Naive thymus-derived CD4-positive, alpha-beta T cell (primary cell): ENCODE measurements at regions of chr10 and their contacts with region 1.

Region 1: GRCh38 chr10:132536971-132537712 is 445 bp upstream of the INPP5A start:
- DNase-seq: peak; percentile 100
- ATAC-seq: peak; percentile 94
- H3K4me3 ChIP-seq: peak overlapping the region; percentile 57
- H3K4me3 Mint-ChIP-seq: peak overlapping the region; percentile 66 to 98 (median 78)
- H3K27ac ChIP-seq: peak overlapping the region; percentile 81
- H3K27ac Mint-ChIP-seq: peak overlapping the region in 3 of 9 donors; percentile 72 to 78 (median 76)
- H3K4me1 ChIP-seq: peaks cover 11 to 41% of the 10 kb centered on the region in 2 donors
- H3K4me1 Mint-ChIP-seq: peaks cover 33 to 53% (median 42%) of the 10 kb centered on the region in 7 donors
- H3K27me3 ChIP-seq: no peaks in the 10 kb centered on the region
- H3K27me3 Mint-ChIP-seq: peaks cover 0 to 27% (median 0%) of the 10 kb centered on the region in 5 donors

Region 2: GRCh38 chr10:132163278-132163765 is 373.8 kb before region 1 on chr10:
- CTCF ChIA-PET with region 1: no interaction called
- POLR2A ChIA-PET with region 1: no interaction called
- intact Hi-C with region 1: loop called (anchors 1 to 5 kb)
- DNase-seq: peak in 4 of 9 donors; percentile 25 to 70 (median 43)
- ATAC-seq: peak; percentile 55
- H3K4me3 ChIP-seq: no peak overlapping the region
- H3K4me3 Mint-ChIP-seq: peak overlapping the region in 2 of 10 donors; percentile 30 to 64
- H3K27ac ChIP-seq: peak overlapping the region; percentile 80
- H3K27ac Mint-ChIP-seq: peak overlapping the region in 8 of 9 donors; percentile 28 to 86 (median 73)
- H3K4me1 ChIP-seq: peaks cover 23 to 33% of the 10 kb centered on the region in 2 donors
- H3K4me1 Mint-ChIP-seq: peaks cover 16 to 54% (median 43%) of the 10 kb centered on the region in 7 donors
- H3K27me3 ChIP-seq: no peaks in the 10 kb centered on the region
- H3K27me3 Mint-ChIP-seq: no peaks in the 10 kb centered on the region

Region 3: GRCh38 chr10:132396495-132397035 is 140.6 kb before region 1 on chr10:
- CTCF ChIA-PET with region 1: no interaction called
- POLR2A ChIA-PET with region 1: no interaction called
- intact Hi-C with region 1: loop called (anchors 1 to 5 kb)
- DNase-seq: peak; percentile 61 to 78 (median 74)
- ATAC-seq: peak; percentile 78
- H3K4me3 ChIP-seq: no peak overlapping the region
- H3K4me3 Mint-ChIP-seq: peak overlapping the region in 1 of 10 donors; percentile 94
- H3K27ac ChIP-seq: peak overlapping the region; percentile 77
- H3K27ac Mint-ChIP-seq: no peak overlapping the region
- H3K4me1 ChIP-seq: peaks cover 9 to 10% of the 10 kb centered on the region in 2 donors
- H3K4me1 Mint-ChIP-seq: peaks cover 0 to 42% (median 25%) of the 10 kb centered on the region in 7 donors
- H3K27me3 ChIP-seq: no peaks in the 10 kb centered on the region
- H3K27me3 Mint-ChIP-seq: peaks cover 0 to 6% (median 0%) of the 10 kb centered on the region in 5 donors

Region 4: GRCh38 chr10:132489087-132489703 is 47.9 kb before region 1 on chr10:
- CTCF ChIA-PET with region 1: no interaction called
- POLR2A ChIA-PET with region 1: no interaction called
- intact Hi-C with region 1: no loop called
- DNase-seq: no peak
- ATAC-seq: no peak
- H3K4me3 ChIP-seq: no peak overlapping the region
- H3K4me3 Mint-ChIP-seq: no peak overlapping the region
- H3K27ac ChIP-seq: no peak overlapping the region
- H3K27ac Mint-ChIP-seq: no peak overlapping the region
- H3K4me1 ChIP-seq: no peaks in the 10 kb centered on the region
- H3K4me1 Mint-ChIP-seq: peaks cover 0 to 5% (median 0%) of the 10 kb centered on the region in 7 donors
- H3K27me3 ChIP-seq: no peaks in the 10 kb centered on the region
- H3K27me3 Mint-ChIP-seq: no peaks in the 10 kb centered on the region

Region 5: DNA sequence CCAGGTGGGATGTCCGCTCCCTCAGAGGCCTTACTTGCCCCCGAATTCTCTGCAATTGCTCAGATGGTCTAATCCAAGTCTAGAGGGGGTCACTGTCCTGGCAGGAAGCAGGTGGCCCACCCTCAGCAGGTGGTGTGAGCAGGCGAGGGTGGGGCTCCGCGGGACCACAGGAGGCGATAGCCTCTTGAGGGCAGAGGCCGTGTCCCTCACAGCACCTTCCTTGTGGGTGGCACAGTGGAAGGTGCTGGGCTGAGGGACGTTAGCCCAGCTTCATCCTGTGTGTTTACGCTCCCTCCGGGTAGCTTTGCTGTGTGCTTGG is 37.8 kb before region 1 on chr10:
- CTCF ChIA-PET with region 1: no interaction called
- POLR2A ChIA-PET with region 1: no interaction called
- intact Hi-C with region 1: no loop called
- DNase-seq: no peak
- ATAC-seq: no peak
- H3K4me3 ChIP-seq: no peak overlapping the region
- H3K4me3 Mint-ChIP-seq: no peak overlapping the region
- H3K27ac ChIP-seq: no peak overlapping the region
- H3K27ac Mint-ChIP-seq: no peak overlapping the region
- H3K4me1 ChIP-seq: no peaks in the 10 kb centered on the region
- H3K4me1 Mint-ChIP-seq: no peaks in the 10 kb centered on the region
- H3K27me3 ChIP-seq: no peaks in the 10 kb centered on the region
- H3K27me3 Mint-ChIP-seq: peaks cover 0 to 17% (median 0%) of the 10 kb centered on the region in 5 donors

Region 6: GRCh38 chr10:132571650-132572535 is 34.8 kb after region 1 on chr10:
- CTCF ChIA-PET with region 1: interaction called, 3 read pairs
- POLR2A ChIA-PET with region 1: interaction called, 3 read pairs
- intact Hi-C with region 1: loop called (anchors 1 kb)
- DNase-seq: peak in 3 of 9 donors; percentile 18 to 72 (median 36)
- ATAC-seq: peak; percentile 44
- H3K4me3 ChIP-seq: no peak overlapping the region
- H3K4me3 Mint-ChIP-seq: peak overlapping the region in 4 of 10 donors; percentile 56 to 79 (median 74)
- H3K27ac ChIP-seq: no peak overlapping the region
- H3K27ac Mint-ChIP-seq: peak overlapping the region in 6 of 9 donors; percentile 16 to 74 (median 70)
- H3K4me1 ChIP-seq: peaks cover 10 to 22% of the 10 kb centered on the region in 2 donors
- H3K4me1 Mint-ChIP-seq: peaks cover 2 to 31% (median 26%) of the 10 kb centered on the region in 7 donors
- H3K27me3 ChIP-seq: no peaks in the 10 kb centered on the region
- H3K27me3 Mint-ChIP-seq: peaks cover 0 to 2% (median 0%) of the 10 kb centered on the region in 5 donors

Region 7: DNA sequence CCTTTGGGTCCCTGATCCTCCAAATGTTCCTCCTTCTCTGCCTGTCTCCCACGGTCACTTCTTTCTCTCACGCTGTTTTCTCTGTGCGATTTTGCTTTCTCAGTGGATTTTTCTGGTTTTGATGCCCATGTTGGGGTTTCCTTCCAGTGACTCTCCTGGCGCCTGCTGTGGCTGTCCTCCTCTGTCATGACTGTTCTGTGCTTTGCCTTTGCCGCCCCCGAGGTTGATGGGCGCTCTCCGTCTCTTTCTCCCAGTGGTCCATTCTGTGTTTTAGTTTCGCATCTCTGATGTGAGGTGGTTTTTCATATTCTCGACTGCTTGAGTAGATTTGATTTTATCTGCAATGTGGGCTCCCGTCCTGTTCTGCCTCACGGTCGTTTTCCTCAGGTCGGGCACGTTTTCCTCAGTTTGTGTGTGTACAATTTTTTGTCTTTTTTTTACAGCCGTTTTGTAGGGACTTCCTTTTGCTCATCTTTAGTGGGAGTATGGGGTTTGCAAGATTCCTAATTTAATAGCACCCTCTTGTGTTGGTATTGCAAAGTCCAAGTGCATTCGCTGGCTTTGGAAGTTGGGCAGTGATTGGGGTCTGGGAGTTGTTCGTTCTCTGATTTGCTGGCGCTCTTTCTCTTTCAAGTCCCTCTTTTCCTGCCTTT is 100.5 kb after region 1 on chr10:
- CTCF ChIA-PET with region 1: interaction called, 9 read pairs
- POLR2A ChIA-PET with region 1: no interaction called
- intact Hi-C with region 1: loop called (anchors 1 to 5 kb)
- DNase-seq: peak in 6 of 9 donors; percentile 30 to 64 (median 56)
- ATAC-seq: peak; percentile 79
- H3K4me3 ChIP-seq: no peak overlapping the region
- H3K4me3 Mint-ChIP-seq: peak overlapping the region in 2 of 10 donors; percentile 11 to 46
- H3K27ac ChIP-seq: no peak overlapping the region
- H3K27ac Mint-ChIP-seq: peak overlapping the region in 3 of 9 donors; percentile 48 to 80 (median 76)
- H3K4me1 ChIP-seq: no peaks in the 10 kb centered on the region
- H3K4me1 Mint-ChIP-seq: peaks cover 24 to 62% (median 55%) of the 10 kb centered on the region in 7 donors
- H3K27me3 ChIP-seq: no peaks in the 10 kb centered on the region
- H3K27me3 Mint-ChIP-seq: peaks cover 0 to 6% (median 0%) of the 10 kb centered on the region in 5 donors

Region 8: GRCh38 chr10:133378251-133379096 is 841.3 kb after region 1 on chr10:
- CTCF ChIA-PET with region 1: no interaction called
- POLR2A ChIA-PET with region 1: no interaction called
- intact Hi-C with region 1: loop called (anchors 5 to 10 kb)
- DNase-seq: peak in 8 of 9 donors; percentile 51 to 78 (median 59)
- ATAC-seq: peak; percentile 73
- H3K4me3 ChIP-seq: peak overlapping the region; percentile 92
- H3K4me3 Mint-ChIP-seq: peak overlapping the region; percentile 82 to 90 (median 86)
- H3K27ac ChIP-seq: peak overlapping the region; percentile 69
- H3K27ac Mint-ChIP-seq: peak overlapping the region in 5 of 9 donors; percentile 33 to 84 (median 75)
- H3K4me1 ChIP-seq: peaks cover 0 to 3% of the 10 kb centered on the region in 2 donors
- H3K4me1 Mint-ChIP-seq: peaks cover 0 to 18% (median 10%) of the 10 kb centered on the region in 7 donors
- H3K27me3 ChIP-seq: no peaks in the 10 kb centered on the region
- H3K27me3 Mint-ChIP-seq: peaks cover 0 to 14% (median 0%) of the 10 kb centered on the region in 5 donors